ENCODE measurements at regions of chr1 and their contacts with region 1.

Region 1: DNA sequence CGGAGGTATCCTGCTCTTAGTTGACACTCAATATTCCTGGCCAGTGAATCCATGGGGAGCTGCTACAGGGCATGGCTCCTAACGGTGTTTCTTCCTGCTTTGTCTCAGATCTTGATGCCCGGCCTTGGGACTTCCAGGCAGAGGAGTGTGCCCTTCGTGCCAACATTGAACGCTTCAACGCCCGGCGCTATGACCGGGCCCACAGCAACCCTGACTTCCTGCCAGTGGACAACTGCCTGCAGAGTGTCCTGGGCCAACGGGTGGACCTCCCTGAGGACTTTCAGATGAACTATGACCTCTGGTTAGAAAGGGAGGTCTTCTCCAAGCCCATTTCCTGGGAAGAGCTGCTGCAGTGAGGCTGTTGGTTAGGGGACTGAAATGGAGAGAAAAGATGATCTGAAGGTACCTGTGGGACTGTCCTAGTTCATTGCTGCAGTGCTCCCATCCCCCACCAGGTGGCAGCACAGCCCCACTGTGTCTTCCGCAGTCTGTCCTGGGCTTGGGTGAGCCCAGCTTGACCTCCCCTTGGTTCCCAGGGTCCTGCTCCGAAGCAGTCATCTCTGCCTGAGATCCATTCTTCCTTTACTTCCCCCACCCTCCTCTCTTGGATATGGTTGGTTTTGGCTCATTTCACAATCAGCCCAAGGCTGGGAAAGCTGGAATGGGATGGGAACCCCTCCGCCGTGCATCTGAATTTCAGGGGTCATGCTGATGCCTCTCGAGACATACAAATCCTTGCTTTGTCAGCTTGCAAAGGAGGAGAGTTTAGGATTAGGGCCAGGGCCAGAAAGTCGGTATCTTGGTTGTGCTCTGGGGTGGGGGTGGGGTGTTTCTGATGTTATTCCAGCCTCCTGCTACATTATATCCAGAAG is 16.7 kb downstream of the ALX3 start:
- H3K4me3 ChIP-seq: no peak overlapping the region
- H3K27ac ChIP-seq: no peak overlapping the region
- H3K4me1 ChIP-seq: no peaks in the 10 kb centered on the region
- CTCF ChIP-seq: peak; percentile 92

Region 2: DNA sequence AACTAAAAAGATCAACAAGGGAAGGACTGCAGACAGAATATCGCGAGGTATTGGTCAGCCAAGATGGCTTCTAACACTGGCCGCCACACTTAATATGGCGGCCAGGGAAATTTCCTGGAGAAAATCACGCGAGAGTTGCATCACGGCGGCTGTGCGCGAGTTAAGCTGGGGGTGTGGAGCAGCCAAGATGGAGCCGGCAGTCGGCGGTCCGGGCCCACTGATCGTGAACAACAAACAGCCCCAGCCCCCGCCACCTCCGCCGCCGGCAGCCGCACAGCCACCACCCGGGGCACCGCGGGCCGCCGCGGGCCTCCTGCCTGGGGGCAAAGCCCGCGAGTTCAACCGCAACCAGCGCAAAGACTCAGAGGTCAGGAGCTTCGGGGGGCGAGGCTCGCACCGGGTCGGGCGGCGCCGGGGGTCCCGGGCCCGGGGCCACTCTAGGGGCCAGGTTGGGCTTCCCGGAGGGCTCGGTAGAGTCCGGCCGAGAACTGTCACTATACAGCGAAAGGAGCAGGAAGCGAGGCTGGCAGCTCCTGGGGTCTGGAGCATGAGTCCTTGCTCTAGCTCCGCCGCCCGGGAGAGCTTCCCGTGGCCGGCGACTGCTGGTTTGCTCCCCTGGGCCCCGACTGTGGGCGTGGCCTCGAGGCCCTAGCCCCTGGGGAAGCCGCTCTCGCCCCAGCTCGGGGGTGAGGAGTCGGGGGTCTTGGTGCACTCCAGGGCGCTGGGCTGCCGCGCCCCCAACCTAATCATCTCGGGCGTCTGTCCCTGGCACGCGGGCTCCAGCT is 19.1 kb before region 1 on chr1 and contains the start of gene STRIP1:
- CTCF ChIA-PET with region 1: interaction called, 34 read pairs
- POLR2A ChIA-PET with region 1: interaction called, 8 read pairs
- H3K4me3 ChIP-seq: peak within 1 kb of the TSS; percentile 80
- H3K27ac ChIP-seq: peak within 1 kb of the TSS; percentile 76
- H3K4me1 ChIP-seq: peaks cover 4% of the 10 kb centered on the region; the same call in 1 of the 2 replicates
- CTCF ChIP-seq: no peak

Region 3: GRCh38 chr1:110070282-110070669 is 16.5 kb after region 1 on chr1:
- CTCF ChIA-PET with region 1: interaction called, 15 read pairs
- POLR2A ChIA-PET with region 1: no interaction called
- H3K4me3 ChIP-seq: no peak overlapping the region
- H3K27ac ChIP-seq: no peak overlapping the region
- H3K4me1 ChIP-seq: no peaks in the 10 kb centered on the region
- CTCF ChIP-seq: no peak

Region 4: DNA sequence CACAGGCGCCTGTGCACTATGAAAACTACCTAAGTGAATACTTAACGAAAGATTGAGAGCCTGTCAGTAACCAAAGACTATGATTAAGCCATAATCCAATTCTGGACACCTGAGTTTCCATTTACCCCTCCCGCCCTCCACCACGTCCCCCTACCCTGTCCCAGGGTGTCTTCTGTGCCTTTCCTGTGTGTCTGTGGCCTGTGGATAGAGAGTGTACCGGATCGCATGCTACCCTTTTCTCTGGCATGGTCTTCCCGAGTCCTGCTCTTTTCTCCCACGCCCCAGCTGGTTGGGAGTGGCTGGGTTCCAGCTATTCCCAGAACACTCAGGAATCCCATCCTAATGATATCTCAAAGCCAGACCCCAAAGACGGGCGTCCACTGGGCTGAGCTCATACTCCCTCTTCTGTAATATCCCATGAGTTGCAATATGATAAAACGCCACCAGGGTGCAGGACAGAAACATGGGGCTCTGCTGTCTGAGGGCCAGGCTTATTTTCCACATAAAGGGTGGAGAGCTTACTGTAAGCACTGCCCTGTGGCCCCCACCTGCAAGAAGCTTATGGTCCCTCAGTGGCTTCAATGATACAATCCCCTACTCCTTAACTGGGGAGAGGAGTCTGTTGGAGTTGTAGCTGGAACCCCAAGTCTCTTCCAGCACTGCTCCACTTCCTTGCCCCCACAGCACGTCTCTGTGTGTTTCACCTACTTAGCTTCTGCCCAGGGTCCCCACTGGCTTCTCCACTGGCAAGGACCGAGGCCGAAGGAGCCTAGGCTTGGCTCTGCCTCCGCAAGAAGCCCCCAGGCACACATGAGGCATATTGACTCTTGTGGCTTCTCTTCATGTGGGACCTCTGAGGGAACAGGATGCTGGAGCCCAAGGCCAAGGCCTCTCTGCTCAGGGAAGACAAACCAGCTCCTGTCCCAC is 34.3 kb after region 1 on chr1:
- CTCF ChIA-PET with region 1: interaction called, 14 read pairs
- POLR2A ChIA-PET with region 1: no interaction called
- H3K4me3 ChIP-seq: no peak overlapping the region
- H3K27ac ChIP-seq: no peak overlapping the region
- H3K4me1 ChIP-seq: no peaks in the 10 kb centered on the region
- CTCF ChIP-seq: peak; percentile 40; the same call in 1 of the 2 replicates

Region 5: DNA sequence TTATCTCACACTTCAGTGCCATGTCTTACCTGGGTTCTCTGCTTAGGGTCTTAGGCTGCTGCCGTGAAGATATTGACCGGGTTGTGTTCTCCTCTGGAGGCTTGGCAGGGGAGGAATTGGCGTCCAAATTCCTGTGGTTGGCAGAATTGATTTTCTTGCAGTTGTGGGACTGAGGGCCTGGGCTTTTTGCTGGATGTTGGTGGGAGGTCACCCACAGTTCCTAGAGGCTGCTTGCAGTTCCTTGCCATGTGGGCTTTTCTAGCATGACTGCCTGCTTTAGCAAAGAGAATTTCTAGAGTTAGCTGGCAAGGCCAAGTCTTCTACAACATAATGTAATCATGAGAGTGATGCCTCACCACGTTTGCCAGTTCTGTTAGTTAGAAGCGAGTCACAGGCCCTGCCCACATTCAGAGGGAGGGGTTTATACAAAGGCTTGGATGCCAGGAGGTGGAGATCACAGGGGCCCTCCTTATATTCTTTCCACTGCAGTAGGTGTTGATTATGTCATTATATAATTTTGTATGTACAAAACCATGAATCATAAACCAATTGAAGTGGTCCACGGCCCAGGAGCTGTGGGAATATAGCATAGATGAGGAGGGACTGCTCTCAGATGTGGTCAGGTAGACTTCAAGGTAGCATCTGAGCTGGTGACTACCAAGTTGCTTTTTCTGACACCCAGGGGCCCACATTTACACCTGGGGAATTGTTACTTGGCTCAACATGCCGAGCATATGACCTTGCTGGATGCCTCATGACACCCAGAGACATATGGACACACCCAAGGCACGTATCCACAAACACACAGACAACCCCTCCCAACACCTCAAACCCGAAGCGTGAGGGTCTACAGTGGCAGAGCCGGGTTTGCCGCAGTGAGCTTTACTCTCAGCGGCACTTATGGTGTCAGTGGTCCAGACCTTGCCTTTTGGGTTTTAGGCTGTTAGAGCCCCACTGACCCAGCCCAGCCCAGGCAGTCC is 65.1 kb after region 1 on chr1:
- CTCF ChIA-PET with region 1: interaction called, 63 read pairs
- POLR2A ChIA-PET with region 1: no interaction called
- H3K4me3 ChIP-seq: no peak overlapping the region
- H3K27ac ChIP-seq: no peak overlapping the region
- H3K4me1 ChIP-seq: no peaks in the 10 kb centered on the region
- CTCF ChIP-seq: no peak